AG04450 (cell line): ENCODE measurements at regions of chr2 and their contacts with region 1.

Region 1: GRCh38 chr2:108575132-108575966 is 41.1 kb downstream of the LIMS1 start:
- DNase-seq: peak; percentile 86
- H3K4me3 ChIP-seq: no peak overlapping the region
- H3K27ac ChIP-seq: peak overlapping the region; percentile 84
- H3K27me3 ChIP-seq: no peaks in the 10 kb centered on the region
- CTCF ChIP-seq: no peak

Region 2: GRCh38 chr2:108363031-108363907 is 212.1 kb before region 1 on chr2:
- CTCF ChIA-PET with region 1: no interaction called
- POLR2A ChIA-PET with region 1: no interaction called
- DNase-seq: no peak
- H3K4me3 ChIP-seq: no peak overlapping the region
- H3K27ac ChIP-seq: no peak overlapping the region
- H3K27me3 ChIP-seq: no peaks in the 10 kb centered on the region
- CTCF ChIP-seq: no peak

Region 3: GRCh38 chr2:108533832-108534583 is 41.3 kb before region 1 on chr2 and contains the start of gene LIMS1:
- CTCF ChIA-PET with region 1: interaction called, 4 read pairs
- POLR2A ChIA-PET with region 1: interaction called, 13 read pairs
- DNase-seq: peak; percentile 46
- H3K4me3 ChIP-seq: peak within 1 kb of the TSS; percentile 78
- H3K27ac ChIP-seq: peak within 1 kb of the TSS; percentile 89
- H3K27me3 ChIP-seq: no peaks in the 10 kb centered on the region
- CTCF ChIP-seq: no peak
- polyA plus RNA-seq, gene LIMS1: 87.3 and 95.0 TPM in 2 replicates

Region 4: DNA sequence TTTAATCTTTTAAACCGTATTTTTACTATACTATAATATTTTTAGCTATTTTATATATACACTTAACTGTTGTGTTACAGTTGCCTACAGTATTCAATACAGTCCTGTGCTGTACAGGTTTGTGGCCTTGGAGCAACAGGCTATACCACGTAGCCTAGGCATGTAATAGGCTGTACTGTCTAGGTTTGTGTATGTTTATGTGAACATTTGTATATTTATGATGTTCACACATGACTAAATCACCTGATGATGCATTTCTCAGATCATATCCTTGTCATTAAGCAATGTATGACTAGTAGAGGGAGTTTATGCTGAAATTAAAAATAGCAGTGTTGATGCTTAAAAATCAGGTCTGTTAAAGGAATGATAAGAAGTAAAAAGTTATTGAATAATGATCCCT is 51.6 kb after region 1 on chr2:
- CTCF ChIA-PET with region 1: no interaction called
- POLR2A ChIA-PET with region 1: interaction called, 10 read pairs
- DNase-seq: no peak
- H3K4me3 ChIP-seq: no peak overlapping the region
- H3K27ac ChIP-seq: no peak overlapping the region
- H3K27me3 ChIP-seq: no peaks in the 10 kb centered on the region
- CTCF ChIP-seq: no peak

Region 5: DNA sequence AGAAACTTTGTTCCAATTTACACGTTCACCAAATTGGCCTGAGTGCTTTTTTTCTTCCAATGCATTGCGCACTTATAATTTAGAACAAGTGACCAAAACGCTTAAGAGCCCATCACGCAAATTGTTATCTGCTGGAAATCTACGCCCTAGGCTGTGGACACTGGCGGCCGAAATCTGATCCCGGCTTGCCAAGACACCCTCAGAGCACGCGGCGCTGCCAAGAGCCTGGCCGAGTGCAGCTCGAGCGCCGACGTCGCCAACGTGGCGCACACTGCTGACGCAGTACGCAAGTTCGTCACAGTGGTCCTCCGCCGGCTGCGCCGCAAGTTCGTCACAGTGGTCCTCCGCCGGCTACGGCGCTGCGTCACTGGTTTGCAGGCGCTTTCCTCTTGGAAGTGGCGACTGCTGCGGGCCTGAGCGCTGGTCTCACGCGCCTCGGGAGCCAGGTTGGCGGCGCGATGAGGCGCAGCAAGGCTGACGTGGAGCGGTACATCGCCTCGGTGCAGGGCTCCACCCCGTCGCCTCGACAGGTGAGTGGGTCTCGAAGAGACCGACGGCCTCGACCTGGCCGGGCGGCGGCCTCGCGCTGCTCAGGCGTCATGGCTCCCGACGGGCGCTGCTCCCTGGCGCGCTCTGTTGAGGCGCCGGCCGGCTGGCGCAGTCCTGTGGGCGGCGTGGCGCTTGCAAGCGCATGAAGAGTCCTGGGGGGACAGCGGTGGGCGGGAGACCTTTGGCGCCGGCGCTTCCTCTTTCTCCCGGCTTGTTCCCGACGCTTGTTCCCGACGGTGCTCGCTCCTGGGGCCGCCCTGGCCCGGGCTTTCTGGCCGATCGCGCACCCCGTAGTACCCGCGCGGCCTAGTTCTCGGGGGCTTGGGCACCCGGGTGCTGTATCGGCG is 144.0 kb after region 1 on chr2 and contains the start of gene RANBP2:
- CTCF ChIA-PET with region 1: no interaction called
- POLR2A ChIA-PET with region 1: no interaction called
- DNase-seq: peak; percentile 96
- H3K4me3 ChIP-seq: peak within 1 kb of the TSS; percentile 85
- H3K27ac ChIP-seq: peak within 1 kb of the TSS; percentile 93
- H3K27me3 ChIP-seq: no peaks in the 10 kb centered on the region
- CTCF ChIP-seq: no peak
- polyA plus RNA-seq, gene RANBP2: 22.2 and 29.0 TPM in 2 replicates

Region 6: GRCh38 chr2:109009920-109010610 is 434.7 kb after region 1 on chr2:
- CTCF ChIA-PET with region 1: no interaction called
- POLR2A ChIA-PET with region 1: no interaction called
- DNase-seq: no peak
- H3K4me3 ChIP-seq: no peak overlapping the region
- H3K27ac ChIP-seq: no peak overlapping the region
- H3K27me3 ChIP-seq: peaks cover 16% of the 10 kb centered on the region
- CTCF ChIP-seq: no peak